Cardiac septum (tissue), 1 donor: ENCODE measurements at regions of chr12 and their contacts with region 1.

Region 1: DNA sequence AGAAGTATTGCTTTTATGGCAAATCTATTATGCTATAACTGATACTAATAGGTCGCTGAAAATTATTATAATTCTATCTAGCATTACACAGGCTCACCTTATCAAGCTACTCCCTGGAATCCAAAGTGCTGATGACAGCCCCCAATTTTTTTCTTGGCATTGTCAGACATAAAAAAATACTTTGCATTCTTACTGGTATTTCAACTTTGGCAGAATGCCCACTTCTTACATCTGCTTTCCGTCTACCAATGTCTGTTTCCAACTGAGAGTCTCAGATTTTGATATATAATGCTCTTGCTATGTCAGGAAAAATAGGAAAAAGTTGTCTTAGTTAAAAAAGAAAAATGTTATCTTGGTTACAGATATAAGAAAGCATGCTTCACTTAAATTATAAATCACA is 615.4 kb downstream of the C12orf50 start:
- DNase-seq: no peak

Region 2: DNA sequence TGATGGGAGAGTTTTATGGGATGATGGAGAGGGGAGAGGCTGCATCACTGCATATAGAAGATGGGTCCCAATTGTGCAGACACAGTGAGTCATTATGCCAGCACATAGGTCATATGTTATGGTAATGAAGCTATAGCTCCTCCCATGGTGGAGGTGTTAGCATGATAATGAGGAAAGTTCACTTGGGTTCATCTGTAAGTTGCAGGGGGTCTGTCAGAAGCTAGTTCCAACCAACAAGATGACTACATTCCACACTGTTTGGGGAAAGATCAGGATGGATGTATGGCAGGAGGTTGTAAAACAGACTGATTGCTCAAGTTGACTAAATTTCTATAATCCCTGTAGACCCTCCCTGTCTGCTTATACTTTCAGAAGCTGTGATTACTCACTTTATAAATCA is 54.2 kb after region 1 on chr12:
- intact Hi-C with region 1: loop called (anchors 2 kb)
- DNase-seq: no peak